Prostate gland (tissue), 2 donors: ENCODE measurements at regions of chr9 and their contacts with region 1.

Region 1: GRCh38 chr9:110183208-110184145 is 24.5 kb downstream of the C9orf152 start:
- DNase-seq: peak; percentile 85
- H3K4me3 ChIP-seq: no peak overlapping the region
- H3K27ac ChIP-seq: no peak overlapping the region
- H3K4me1 ChIP-seq: peaks cover 5% of the 10 kb centered on the region
- H3K27me3 ChIP-seq: no peaks in the 10 kb centered on the region
- CTCF ChIP-seq: peak; percentile 62 to 89 (median 86)
- POLR2A ChIP-seq: no peak

Region 2: DNA sequence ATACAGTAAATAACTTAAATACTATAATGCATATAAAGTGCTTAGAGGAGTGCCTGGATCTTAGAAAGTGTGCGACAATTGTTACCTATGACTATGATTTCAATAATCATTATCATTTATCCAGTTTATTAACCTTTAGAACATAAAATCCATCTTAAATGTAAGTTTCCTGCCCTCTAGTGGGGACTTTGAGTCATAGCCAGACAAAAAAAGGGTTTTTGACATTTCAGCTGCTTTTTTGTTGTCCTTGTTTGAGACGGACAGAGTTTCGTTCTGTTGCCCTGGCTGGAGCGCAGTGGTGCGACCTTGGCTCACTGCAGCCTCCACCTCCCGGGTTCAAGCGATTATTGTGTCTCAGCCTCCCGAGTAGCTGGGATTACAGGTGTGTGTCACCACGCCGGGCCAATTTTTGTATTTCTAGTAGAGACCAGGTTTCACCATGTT is 34.2 kb after region 1 on chr9:
- intact Hi-C with region 1: loop called (anchors 2 kb)
- DNase-seq: peak; percentile 14
- H3K4me3 ChIP-seq: no peak overlapping the region
- H3K27ac ChIP-seq: no peak overlapping the region
- H3K4me1 ChIP-seq: no peaks in the 10 kb centered on the region
- H3K27me3 ChIP-seq: no peaks in the 10 kb centered on the region
- CTCF ChIP-seq: peak; percentile 69 to 89 (median 81)
- POLR2A ChIP-seq: no peak

Region 3: DNA sequence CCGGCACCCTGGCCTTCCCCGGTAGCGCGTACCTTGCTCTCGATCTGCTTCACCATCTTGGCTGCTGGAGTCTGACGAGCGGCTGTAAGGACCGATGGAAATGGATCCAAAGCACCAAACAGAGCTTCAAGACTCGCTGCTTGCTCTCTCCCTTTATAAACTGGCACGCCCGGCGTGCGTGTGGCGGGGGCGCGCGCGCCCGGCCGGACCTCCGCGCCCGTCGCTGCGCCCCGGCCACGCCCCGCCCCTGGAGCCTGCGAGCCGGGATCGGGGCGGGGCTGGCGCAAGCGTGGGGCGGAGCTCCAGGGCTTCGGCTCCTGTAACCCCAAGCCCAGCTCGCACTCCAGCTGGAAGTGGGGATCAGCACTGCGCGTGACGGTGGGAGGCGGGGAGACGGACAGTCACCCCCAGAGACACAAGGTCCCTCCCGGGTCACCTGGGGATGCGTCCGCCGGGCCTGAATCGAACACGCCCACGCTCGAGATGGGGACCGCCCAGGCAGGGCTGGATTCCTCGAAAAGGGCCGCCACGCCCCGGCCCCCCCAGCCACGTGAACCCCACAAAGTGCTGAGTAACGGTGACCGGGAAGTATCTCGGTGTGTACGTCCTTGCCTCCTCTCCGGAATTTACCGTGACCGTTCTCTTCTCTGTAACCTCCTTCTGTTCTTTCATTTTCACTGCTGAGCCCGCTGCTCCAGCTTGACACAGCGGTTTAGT is 73.1 kb after region 1 on chr9 and contains the start of gene TXN:
- intact Hi-C with region 1: loop called (anchors 10 kb)
- DNase-seq: peak; percentile 84
- H3K4me3 ChIP-seq: peak within 1 kb of the TSS; percentile 84 to 95
- H3K27ac ChIP-seq: peak within 1 kb of the TSS; percentile 89 to 92
- H3K4me1 ChIP-seq: no peaks in the 10 kb centered on the region
- H3K27me3 ChIP-seq: no peaks in the 10 kb centered on the region
- CTCF ChIP-seq: no peak
- POLR2A ChIP-seq: peak; percentile 76
- total RNA-seq, gene TXN: 56.9 to 164 TPM

Region 4: GRCh38 chr9:110427497-110428104 is 244.1 kb after region 1 on chr9:
- intact Hi-C with region 1: loop called (anchors 10 kb)
- DNase-seq: no peak
- H3K4me3 ChIP-seq: no peak overlapping the region
- H3K27ac ChIP-seq: no peak overlapping the region
- H3K4me1 ChIP-seq: no peaks in the 10 kb centered on the region
- H3K27me3 ChIP-seq: no peaks in the 10 kb centered on the region
- CTCF ChIP-seq: peak in 1 of 4 experiments; percentile 43
- POLR2A ChIP-seq: no peak

Region 5: DNA sequence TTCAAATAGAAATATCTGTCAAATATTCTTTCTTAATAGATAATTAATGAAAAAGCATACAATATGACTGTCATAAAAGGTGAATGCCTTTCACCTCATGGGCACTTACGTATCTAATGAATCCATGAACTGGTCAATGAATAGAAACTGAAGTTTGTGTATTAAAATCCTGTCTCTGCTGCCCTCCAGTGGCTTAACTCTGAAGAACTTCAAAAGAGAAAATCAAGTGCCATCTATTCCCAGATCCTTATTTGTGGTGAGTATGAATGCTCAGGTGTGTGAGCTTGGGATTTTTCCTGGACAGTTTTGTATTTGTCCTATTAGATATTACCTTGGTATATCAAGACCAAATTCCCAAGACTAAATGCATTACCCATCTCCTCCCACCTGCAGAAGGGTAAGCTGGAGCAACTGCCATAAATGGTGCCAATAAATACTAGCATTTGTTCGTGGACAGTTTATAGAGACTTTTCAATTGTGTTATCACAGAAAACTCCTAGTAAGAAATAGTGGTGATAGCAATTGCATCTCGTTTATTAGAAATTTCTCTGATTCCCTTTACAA is 440.1 kb after region 1 on chr9:
- intact Hi-C with region 1: loop called (anchors 5 kb)
- DNase-seq: peak; percentile 49
- H3K4me3 ChIP-seq: no peak overlapping the region
- H3K27ac ChIP-seq: no peak overlapping the region
- H3K4me1 ChIP-seq: no peaks in the 10 kb centered on the region
- H3K27me3 ChIP-seq: no peaks in the 10 kb centered on the region
- CTCF ChIP-seq: peak; percentile 44 to 81 (median 70)
- POLR2A ChIP-seq: no peak